ENCODE measurements at regions of chr6 and their contacts with region 1.

Region 1: GRCh38 chr6:22575190-22575589 is 5.8 kb downstream of the HDGFL1 start:
- DNase-seq: peak; percentile 53
- ATAC-seq: peak; percentile 89
- H3K4me3 ChIP-seq: no peak overlapping the region
- H3K27ac ChIP-seq: no peak overlapping the region
- H3K4me1 ChIP-seq: peaks cover 12% of the 10 kb centered on the region
- H3K27me3 ChIP-seq: no peaks in the 10 kb centered on the region
- CTCF ChIP-seq: no peak

Region 2: GRCh38 chr6:22147921-22148776 is 427.0 kb before region 1 on chr6:
- CTCF ChIA-PET with region 1: no interaction called
- POLR2A ChIA-PET with region 1: no interaction called
- intact Hi-C with region 1: no loop called
- DNase-seq: peak; percentile 54
- ATAC-seq: peak; percentile 80
- H3K4me3 ChIP-seq: no peak overlapping the region
- H3K27ac ChIP-seq: no peak overlapping the region
- H3K4me1 ChIP-seq: no peaks in the 10 kb centered on the region
- H3K27me3 ChIP-seq: no peaks in the 10 kb centered on the region
- CTCF ChIP-seq: no peak

Region 3: GRCh38 chr6:22248513-22249308 is 326.5 kb before region 1 on chr6:
- CTCF ChIA-PET with region 1: no interaction called
- POLR2A ChIA-PET with region 1: no interaction called
- intact Hi-C with region 1: loop called (anchors 10 kb)
- DNase-seq: peak; percentile 93
- ATAC-seq: peak; percentile 79
- H3K4me3 ChIP-seq: peak overlapping the region; percentile 30
- H3K27ac ChIP-seq: peak overlapping the region; percentile 95
- H3K4me1 ChIP-seq: peaks cover 45% of the 10 kb centered on the region
- H3K27me3 ChIP-seq: no peaks in the 10 kb centered on the region
- CTCF ChIP-seq: no peak

Region 4: DNA sequence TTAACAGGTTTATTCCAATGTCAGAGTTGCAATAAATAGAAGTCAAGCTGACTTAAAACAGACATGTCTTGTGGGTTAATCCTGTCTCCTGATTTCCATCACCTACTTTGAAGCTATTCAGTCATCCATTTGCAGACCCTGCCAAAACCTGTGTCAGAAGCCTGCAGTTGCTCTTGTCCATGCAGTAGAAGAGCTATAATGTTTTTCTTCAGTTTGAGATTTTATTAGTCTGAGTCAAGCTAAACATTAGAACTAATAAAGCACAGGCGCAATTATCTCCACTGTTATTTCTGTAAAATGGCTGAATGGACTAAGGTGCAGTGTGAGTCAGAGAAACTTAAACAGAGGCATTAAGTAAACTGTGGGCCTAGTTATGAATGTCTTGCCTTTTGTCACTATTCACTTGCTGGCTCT is 16.8 kb before region 1 on chr6:
- CTCF ChIA-PET with region 1: no interaction called
- POLR2A ChIA-PET with region 1: no interaction called
- intact Hi-C with region 1: loop called (anchors 1 kb)
- DNase-seq: peak; percentile 93
- ATAC-seq: peak; percentile 95
- H3K4me3 ChIP-seq: no peak overlapping the region
- H3K27ac ChIP-seq: peak overlapping the region; percentile 74
- H3K4me1 ChIP-seq: peaks cover 21% of the 10 kb centered on the region
- H3K27me3 ChIP-seq: no peaks in the 10 kb centered on the region
- CTCF ChIP-seq: no peak

Region 5: GRCh38 chr6:22727710-22728109 is 152.5 kb after region 1 on chr6:
- CTCF ChIA-PET with region 1: no interaction called
- POLR2A ChIA-PET with region 1: no interaction called
- intact Hi-C with region 1: no loop called
- DNase-seq: no peak
- ATAC-seq: no peak
- H3K4me3 ChIP-seq: no peak overlapping the region
- H3K27ac ChIP-seq: no peak overlapping the region
- H3K4me1 ChIP-seq: no peaks in the 10 kb centered on the region
- H3K27me3 ChIP-seq: no peaks in the 10 kb centered on the region
- CTCF ChIP-seq: no peak

Region 6: GRCh38 chr6:23784301-23784919 is 1209.2 kb after region 1 on chr6:
- CTCF ChIA-PET with region 1: no interaction called
- POLR2A ChIA-PET with region 1: no interaction called
- intact Hi-C with region 1: no loop called
- DNase-seq: no peak
- ATAC-seq: no peak
- H3K4me3 ChIP-seq: no peak overlapping the region
- H3K27ac ChIP-seq: no peak overlapping the region
- H3K4me1 ChIP-seq: no peaks in the 10 kb centered on the region
- H3K27me3 ChIP-seq: peaks cover 67% of the 10 kb centered on the region
- CTCF ChIP-seq: no peak

Region 7: GRCh38 chr6:24378473-24379097 is 1803.4 kb after region 1 on chr6:
- CTCF ChIA-PET with region 1: no interaction called
- POLR2A ChIA-PET with region 1: interaction called, 10 read pairs
- intact Hi-C with region 1: no loop called
- DNase-seq: no peak
- ATAC-seq: no peak
- H3K4me3 ChIP-seq: no peak overlapping the region
- H3K27ac ChIP-seq: no peak overlapping the region
- H3K4me1 ChIP-seq: peaks cover 18% of the 10 kb centered on the region
- H3K27me3 ChIP-seq: no peaks in the 10 kb centered on the region
- CTCF ChIP-seq: no peak

Measured in PC-3 (cell line).